ENCODE measurements at regions of chr15 and their contacts with region 1.

Region 1: GRCh38 chr15:35751413-35752133 is 205.6 kb upstream of the DPH6 start:
- DNase-seq: no peak
- ATAC-seq: peak; percentile 79

Region 2: DNA sequence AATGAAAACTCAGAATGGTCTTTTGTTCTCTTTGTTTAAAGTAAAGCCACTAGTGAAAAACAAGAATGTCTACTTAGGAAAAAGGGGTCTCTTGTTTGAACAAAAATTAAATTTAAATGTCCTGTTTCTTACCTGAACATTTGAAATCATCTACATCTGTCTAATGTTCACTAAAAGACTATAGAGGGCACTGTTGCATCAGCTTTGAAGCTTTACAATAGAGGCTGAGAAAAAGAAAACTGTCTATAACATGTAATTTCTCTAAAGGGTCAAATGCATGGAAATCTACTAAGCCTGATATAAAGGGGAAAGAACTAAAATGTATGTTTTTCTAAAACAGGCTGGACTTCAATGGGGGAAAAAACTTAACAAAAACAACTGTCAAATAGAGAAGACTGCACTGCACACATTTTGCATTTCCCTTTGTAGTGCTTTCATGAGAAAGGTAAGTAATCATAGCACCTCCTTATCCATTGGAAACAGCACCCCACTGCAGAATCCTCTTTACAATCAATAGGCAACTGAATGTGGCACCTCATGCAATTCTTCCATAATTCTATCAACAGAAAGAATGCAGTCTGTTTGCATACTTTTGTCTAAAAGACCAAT is 231.9 kb before region 1 on chr15:
- intact Hi-C with region 1: loop called (anchors 5 kb)
- DNase-seq: no peak
- ATAC-seq: no peak

Region 3: GRCh38 chr15:35705884-35706585 is 45.5 kb before region 1 on chr15:
- intact Hi-C with region 1: loop called (anchors 5 kb)
- DNase-seq: no peak
- ATAC-seq: peak; percentile 90

Region 4: DNA sequence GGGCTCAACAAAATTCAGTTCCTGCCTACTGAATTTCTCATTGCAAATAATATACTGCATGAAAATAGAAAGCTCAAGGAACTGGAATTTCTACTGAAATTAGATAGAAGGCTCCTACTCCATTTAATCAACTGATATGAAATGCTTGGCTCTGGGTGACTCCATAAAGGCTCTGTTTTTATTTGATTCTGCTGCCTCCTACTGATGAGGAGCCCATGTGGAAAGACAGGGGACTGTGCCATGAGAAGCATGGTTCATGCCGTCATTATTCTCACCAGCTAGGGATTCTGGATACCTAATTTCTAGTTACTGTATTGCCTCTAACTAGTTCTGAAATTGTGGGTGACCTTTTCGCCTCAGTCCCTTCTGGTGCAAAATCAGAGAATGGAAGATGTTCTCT is 160.6 kb after region 1 on chr15:
- intact Hi-C with region 1: loop called (anchors 10 kb)
- DNase-seq: no peak
- ATAC-seq: no peak

Measured in Right ventricle myocardium inferior (tissue), 1 donor.